ENCODE measurements at regions of chr19 and their contacts with region 1.

Region 1: DNA sequence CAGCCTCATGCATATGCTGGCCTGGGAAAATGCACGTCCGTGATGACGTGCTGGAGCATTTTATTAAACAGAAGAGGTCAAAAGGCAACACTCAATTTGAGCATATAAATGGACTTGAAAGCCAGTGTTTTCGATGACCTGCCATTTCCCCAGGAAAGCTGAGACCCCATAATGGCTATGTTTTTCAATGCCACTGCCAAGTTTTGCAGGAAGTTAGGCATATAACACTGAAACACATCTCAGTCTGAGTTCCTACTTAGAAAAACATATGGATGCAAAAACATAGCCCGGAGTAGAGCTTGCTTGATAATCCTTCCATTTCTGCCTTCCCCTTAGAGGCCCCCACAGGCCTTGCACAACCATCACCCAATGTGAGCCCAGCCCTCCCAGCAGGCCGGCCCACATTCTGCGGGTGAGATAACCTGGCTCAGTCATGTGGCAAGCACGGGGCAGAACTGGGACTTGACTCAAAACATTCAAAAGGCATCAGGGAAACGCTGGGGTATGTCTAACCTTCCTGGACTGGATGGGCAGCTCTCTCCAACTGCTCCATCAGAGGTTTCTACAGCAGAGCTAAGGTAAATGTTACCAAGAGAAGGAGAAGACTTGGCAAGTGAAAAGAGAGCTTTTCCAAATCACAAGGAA is 24.9 kb downstream of the EPS15L1 start:
- DNase-seq: peak; percentile 80
- ATAC-seq: peak; percentile 98
- H3K4me3 ChIP-seq: no peak overlapping the region
- H3K27ac ChIP-seq: peak overlapping the region; percentile 45
- H3K4me1 ChIP-seq: peaks cover 44% of the 10 kb centered on the region
- H3K27me3 ChIP-seq: no peaks in the 10 kb centered on the region
- CTCF ChIP-seq: 0 out of 2 replicates have a peak, but pooled peaks have one; percentile 3
- EP300 ChIP-seq: peak in 1 of 2 experiments; percentile 53; a peak in 1 of 4 replicates
- POLR2A ChIP-seq: no peak
- RAD21 ChIP-seq: no peak

Region 2: DNA sequence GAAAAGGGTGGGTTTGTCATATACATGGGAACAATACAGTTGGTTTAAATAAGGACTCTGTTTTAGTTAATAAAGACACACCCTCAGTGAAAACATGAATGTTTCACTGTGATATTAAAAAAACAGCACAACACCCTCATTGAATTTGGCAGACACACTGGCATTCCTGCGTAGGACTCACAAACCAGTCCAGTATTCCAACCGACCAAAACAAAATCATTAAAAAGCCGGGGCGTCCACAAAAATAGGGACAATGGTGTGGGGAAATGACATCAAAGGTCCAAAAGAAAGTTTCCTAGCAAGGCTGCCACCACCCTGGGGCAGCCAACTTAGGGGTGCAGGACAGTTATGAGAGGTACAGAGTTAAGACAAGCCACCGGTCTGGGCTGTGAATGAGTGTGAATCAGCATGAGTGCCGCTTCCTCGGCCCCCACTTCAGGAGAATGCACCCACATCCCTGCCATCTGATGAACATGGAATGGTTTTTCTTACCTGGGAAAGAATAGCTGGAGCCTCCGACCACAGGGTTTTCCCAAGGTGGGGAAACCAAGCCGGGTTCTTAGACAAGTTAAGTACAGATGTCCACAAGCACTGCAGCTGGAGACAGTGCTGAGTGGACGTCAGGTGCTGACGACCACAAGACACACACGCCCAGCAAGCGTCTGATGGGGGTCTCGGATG is 48.9 kb before region 1 on chr19:
- CTCF ChIA-PET with region 1: no interaction called
- POLR2A ChIA-PET with region 1: no interaction called
- in situ Hi-C with region 1: no loop called
- intact Hi-C with region 1: no loop called
- DNase-seq: no peak
- ATAC-seq: no peak
- H3K4me3 ChIP-seq: no peak overlapping the region
- H3K27ac ChIP-seq: no peak overlapping the region
- H3K4me1 ChIP-seq: no peaks in the 10 kb centered on the region
- H3K27me3 ChIP-seq: no peaks in the 10 kb centered on the region
- CTCF ChIP-seq: no peak
- EP300 ChIP-seq: no peak
- POLR2A ChIP-seq: no peak
- RAD21 ChIP-seq: no peak

Region 3: DNA sequence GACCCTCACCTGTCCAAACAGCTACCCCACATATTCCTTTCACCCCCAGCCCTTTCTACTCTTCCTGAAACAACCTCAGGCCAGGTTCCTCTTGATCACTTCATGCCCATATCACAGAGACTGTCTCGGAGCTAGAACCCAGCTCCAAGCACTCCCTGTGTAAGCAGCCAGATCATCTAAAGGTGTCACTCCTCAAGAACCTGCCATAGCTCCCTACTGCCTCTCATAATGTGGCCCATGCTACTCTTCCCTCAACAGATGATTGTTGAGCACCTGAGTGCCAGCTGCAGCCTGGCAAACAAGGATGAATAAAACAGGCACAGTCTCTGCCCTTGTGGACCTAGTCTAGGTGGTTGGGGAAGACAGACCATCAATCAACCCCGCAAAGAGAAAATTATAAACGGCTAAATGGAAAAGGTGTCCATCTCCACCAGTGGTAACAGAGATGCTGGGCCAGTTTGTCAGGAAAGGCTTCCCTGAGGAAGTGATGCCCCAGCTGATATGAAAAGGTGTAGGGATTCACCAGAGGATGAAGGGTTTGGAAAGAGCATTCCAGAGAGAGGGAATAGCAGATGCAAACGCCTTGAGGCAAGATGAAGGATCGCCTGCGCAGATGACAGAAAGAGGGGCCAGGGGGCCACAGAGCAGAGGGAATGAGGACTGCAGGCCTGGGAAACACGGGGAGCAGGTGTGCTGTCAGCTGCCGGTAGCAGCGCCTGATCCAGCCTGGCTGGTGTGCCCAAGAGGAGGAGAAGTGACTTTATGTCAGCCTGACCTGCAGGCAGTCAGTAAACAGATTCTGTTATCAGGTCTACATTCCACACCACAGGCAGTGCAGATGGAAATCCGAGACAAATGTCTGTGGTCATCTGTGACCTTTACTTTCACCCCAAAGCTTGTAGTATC is 16.8 kb after region 1 on chr19:
- CTCF ChIA-PET with region 1: no interaction called
- POLR2A ChIA-PET with region 1: interaction called, 3 read pairs
- in situ Hi-C with region 1: no loop called
- intact Hi-C with region 1: loop called (anchors 2 kb)
- DNase-seq: peak; percentile 90
- ATAC-seq: peak; percentile 95
- H3K4me3 ChIP-seq: peak overlapping the region; percentile 20 to 66 (median 48); a peak in 5 of 6 replicates
- H3K27ac ChIP-seq: peak overlapping the region; percentile 72
- H3K4me1 ChIP-seq: peaks cover 86% of the 10 kb centered on the region
- H3K27me3 ChIP-seq: no peaks in the 10 kb centered on the region
- CTCF ChIP-seq: 0 out of 2 replicates have a peak, but pooled peaks have one; percentile 4
- EP300 ChIP-seq: no peak; a peak in 1 of 4 replicates
- POLR2A ChIP-seq: no peak; a peak in 1 of 4 replicates
- RAD21 ChIP-seq: no peak

Measured in HepG2 (cell line).